Naive thymus-derived CD4-positive, alpha-beta T cell (primary cell): ENCODE measurements at regions of chr15 and their contacts with region 1.

Region 1: GRCh38 chr15:77419836-77420609 is at the start of gene PEAK1:
- DNase-seq: peak; percentile 94 to 100 (median 99)
- ATAC-seq: peak; percentile 99
- H3K4me3 ChIP-seq: peak within 1 kb of the TSS; percentile 74
- H3K4me3 Mint-ChIP-seq: peak within 1 kb of the TSS; percentile 93 to 99 (median 98)
- H3K27ac ChIP-seq: peak within 1 kb of the TSS; percentile 86
- H3K27ac Mint-ChIP-seq: peak within 1 kb of the TSS; percentile 91 to 98 (median 97)
- H3K4me1 ChIP-seq: peaks cover 5 to 12% of the 10 kb centered on the region in 2 donors
- H3K4me1 Mint-ChIP-seq: peaks cover 21 to 50% (median 47%) of the 10 kb centered on the region in 7 donors
- H3K27me3 ChIP-seq: no peaks in the 10 kb centered on the region
- H3K27me3 Mint-ChIP-seq: peaks cover 0 to 4% (median 0%) of the 10 kb centered on the region in 5 donors
- total RNA-seq, gene PEAK1: 11.1 to 31.0 (median 15.0) TPM

Region 2: GRCh38 chr15:75842722-75843551 is 1577.1 kb before region 1 on chr15 and contains the start of gene UBE2Q2:
- CTCF ChIA-PET with region 1: no interaction called
- POLR2A ChIA-PET with region 1: no interaction called
- intact Hi-C with region 1: loop called in 1 of 2 experiments (anchors 5 kb)
- DNase-seq: peak; percentile 45 to 78 (median 67)
- ATAC-seq: peak; percentile 75
- H3K4me3 ChIP-seq: peak within 1 kb of the TSS; percentile 68
- H3K4me3 Mint-ChIP-seq: peak within 1 kb of the TSS; percentile 85 to 99 (median 96)
- H3K27ac ChIP-seq: peak within 1 kb of the TSS; percentile 76
- H3K27ac Mint-ChIP-seq: peak within 1 kb of the TSS; percentile 85 to 97 (median 92)
- H3K4me1 ChIP-seq: peaks cover 20 to 30% of the 10 kb centered on the region in 2 donors
- H3K4me1 Mint-ChIP-seq: peaks cover 37 to 50% (median 45%) of the 10 kb centered on the region in 7 donors
- H3K27me3 ChIP-seq: no peaks in the 10 kb centered on the region
- H3K27me3 Mint-ChIP-seq: peaks cover 0 to 20% (median 0%) of the 10 kb centered on the region in 5 donors
- total RNA-seq, gene UBE2Q2: 28.2 to 32.1 (median 28.8) TPM

Region 3: GRCh38 chr15:76994971-76995945 is 424.8 kb before region 1 on chr15 and contains the start of gene PSTPIP1:
- CTCF ChIA-PET with region 1: no interaction called
- POLR2A ChIA-PET with region 1: interaction called, 4 read pairs
- intact Hi-C with region 1: loop called in 1 of 2 experiments (anchors 1 kb)
- DNase-seq: peak; percentile 52 to 79 (median 74)
- ATAC-seq: peak; percentile 83
- H3K4me3 ChIP-seq: peak within 1 kb of the TSS; percentile 90
- H3K4me3 Mint-ChIP-seq: peak within 1 kb of the TSS; percentile 93 to 99 (median 96)
- H3K27ac ChIP-seq: peak within 1 kb of the TSS; percentile 80
- H3K27ac Mint-ChIP-seq: peak within 1 kb of the TSS; percentile 88 to 98 (median 96)
- H3K4me1 ChIP-seq: peaks cover 57 to 58% of the 10 kb centered on the region in 2 donors
- H3K4me1 Mint-ChIP-seq: peaks cover 61 to 76% (median 65%) of the 10 kb centered on the region in 7 donors
- H3K27me3 ChIP-seq: no peaks in the 10 kb centered on the region
- H3K27me3 Mint-ChIP-seq: no peaks in the 10 kb centered on the region
- total RNA-seq, gene PSTPIP1: 101 to 182 (median 146) TPM

Region 4: GRCh38 chr15:77186594-77187011 is 233.4 kb before region 1 on chr15:
- CTCF ChIA-PET with region 1: no interaction called
- POLR2A ChIA-PET with region 1: interaction called, 3 read pairs
- intact Hi-C with region 1: loop called in 1 of 2 experiments (anchors 5 kb)
- DNase-seq: peak in 3 of 9 donors; percentile 13 to 30 (median 18)
- ATAC-seq: no peak
- H3K4me3 ChIP-seq: no peak overlapping the region
- H3K4me3 Mint-ChIP-seq: no peak overlapping the region
- H3K27ac ChIP-seq: no peak overlapping the region
- H3K27ac Mint-ChIP-seq: no peak overlapping the region
- H3K4me1 ChIP-seq: peaks cover under 1 to 7% of the 10 kb centered on the region in 2 donors
- H3K4me1 Mint-ChIP-seq: peaks cover 12 to 57% (median 46%) of the 10 kb centered on the region in 7 donors
- H3K27me3 ChIP-seq: no peaks in the 10 kb centered on the region
- H3K27me3 Mint-ChIP-seq: no peaks in the 10 kb centered on the region

Region 5: DNA sequence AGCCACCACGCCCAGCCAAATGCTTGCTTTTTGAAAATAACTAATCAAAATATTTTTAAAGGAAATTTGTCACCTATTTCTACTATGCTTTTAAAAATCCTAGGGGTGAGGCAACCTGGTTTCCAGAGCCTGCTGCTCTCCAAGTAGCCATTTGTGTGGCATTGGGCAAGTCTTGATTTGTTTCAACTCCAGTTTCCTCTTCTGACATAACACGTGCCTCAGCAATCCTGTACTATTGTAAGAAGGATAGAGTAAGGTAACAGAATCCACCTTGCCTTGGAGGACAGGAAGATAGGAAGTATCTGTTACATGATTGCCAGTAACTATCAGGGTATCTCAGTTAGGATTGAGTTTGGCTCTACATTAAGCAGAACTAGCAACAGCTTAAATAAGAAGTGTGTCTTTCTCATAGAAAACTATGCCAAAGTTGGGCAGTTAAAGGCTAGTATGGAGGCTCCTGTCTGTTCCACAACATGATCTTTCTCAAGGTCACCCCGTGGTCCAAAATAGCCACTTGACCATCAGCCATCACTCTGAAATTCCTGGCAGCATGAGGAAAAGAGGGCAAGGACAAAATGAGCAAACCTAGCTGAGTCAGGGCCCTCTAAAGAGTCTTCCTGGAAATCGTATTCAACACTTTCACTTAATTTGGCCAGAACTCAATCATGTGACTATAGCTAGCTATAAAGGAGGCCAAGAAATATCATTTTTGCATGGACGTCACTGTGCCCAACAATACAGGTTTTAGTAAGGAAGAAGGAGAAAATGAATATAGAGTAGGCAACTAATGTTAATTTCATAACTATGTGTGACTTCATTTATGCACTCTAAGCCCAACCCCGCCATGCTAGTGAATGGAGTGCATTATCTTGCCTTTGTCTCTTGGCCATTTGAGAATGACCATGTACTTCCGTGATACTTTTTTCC is 66.8 kb after region 1 on chr15:
- CTCF ChIA-PET with region 1: no interaction called
- POLR2A ChIA-PET with region 1: no interaction called
- intact Hi-C with region 1: loop called (anchors 5 kb)
- DNase-seq: no peak
- ATAC-seq: no peak
- H3K4me3 ChIP-seq: no peak overlapping the region
- H3K4me3 Mint-ChIP-seq: peak overlapping the region in 4 of 10 donors; percentile 21 to 33 (median 32)
- H3K27ac ChIP-seq: no peak overlapping the region
- H3K27ac Mint-ChIP-seq: peak overlapping the region in 8 of 9 donors; percentile 28 to 80 (median 76)
- H3K4me1 ChIP-seq: peaks cover 0 to 11% of the 10 kb centered on the region in 2 donors
- H3K4me1 Mint-ChIP-seq: peaks cover 8 to 27% (median 25%) of the 10 kb centered on the region in 7 donors
- H3K27me3 ChIP-seq: no peaks in the 10 kb centered on the region
- H3K27me3 Mint-ChIP-seq: no peaks in the 10 kb centered on the region

Region 6: GRCh38 chr15:78437762-78438302 is 1017.8 kb after region 1 on chr15 and contains the start of gene IREB2:
- CTCF ChIA-PET with region 1: no interaction called
- POLR2A ChIA-PET with region 1: no interaction called
- intact Hi-C with region 1: loop called in 1 of 2 experiments (anchors 5 kb)
- DNase-seq: peak; percentile 94 to 99 (median 98)
- ATAC-seq: peak; percentile 96
- H3K4me3 ChIP-seq: peak within 1 kb of the TSS; percentile 69
- H3K4me3 Mint-ChIP-seq: peak within 1 kb of the TSS; percentile 89 to 100 (median 97)
- H3K27ac ChIP-seq: peak within 1 kb of the TSS; percentile 94
- H3K27ac Mint-ChIP-seq: peak within 1 kb of the TSS; percentile 96 to 100 (median 99)
- H3K4me1 ChIP-seq: peaks cover 32 to 36% of the 10 kb centered on the region in 2 donors
- H3K4me1 Mint-ChIP-seq: peaks cover 29 to 56% (median 51%) of the 10 kb centered on the region in 7 donors
- H3K27me3 ChIP-seq: no peaks in the 10 kb centered on the region
- H3K27me3 Mint-ChIP-seq: peaks cover 0 to 2% (median 0%) of the 10 kb centered on the region in 5 donors
- total RNA-seq, gene IREB2: 64.1 to 79.8 (median 69.5) TPM